GM12878 (cell line): ENCODE measurements at regions of chr21 and their contacts with region 1.

Region 1: GRCh38 chr21:36504067-36505058 is 24.4 kb upstream of the CLDN14 start:
- DNase-seq: no peak
- ATAC-seq: peak; percentile 15
- H3K4me3 ChIP-seq: no peak overlapping the region
- H3K27ac ChIP-seq: peak overlapping the region; percentile 71
- H3K4me1 ChIP-seq: peaks cover 35% of the 10 kb centered on the region
- H3K27me3 ChIP-seq: no peaks in the 10 kb centered on the region
- CTCF ChIP-seq: peak; percentile 78 to 85 (median 85); a peak in 5 of 6 replicates
- EP300 ChIP-seq: no peak
- POLR2A ChIP-seq: no peak
- RAD21 ChIP-seq: peak; percentile 97

Region 2: DNA sequence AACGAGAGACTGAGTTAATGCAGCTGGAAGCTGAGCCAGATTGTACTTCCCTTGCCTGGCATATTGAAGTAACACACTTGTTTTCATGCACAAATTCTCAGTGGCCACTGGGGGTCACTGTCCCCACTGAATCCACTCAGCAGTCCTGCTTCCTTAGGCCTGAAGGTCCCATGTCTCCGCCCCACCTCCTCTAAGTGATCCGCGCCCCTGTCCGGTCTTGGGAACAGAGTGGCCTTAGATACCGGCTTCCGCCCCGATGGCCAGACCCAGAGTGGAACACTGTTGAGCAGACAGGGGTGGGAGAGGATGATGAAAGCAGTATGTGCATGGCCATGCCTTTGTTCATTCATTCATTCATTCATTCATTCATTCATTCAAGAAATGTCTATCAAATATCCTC is 84.4 kb before region 1 on chr21:
- CTCF ChIA-PET with region 1: interaction called, 18 read pairs
- POLR2A ChIA-PET with region 1: no interaction called
- RAD21 ChIA-PET with region 1: interaction called, 8 read pairs
- SMC1A ChIA-PET with region 1: interaction called, 7 read pairs
- in situ Hi-C with region 1: no loop called
- intact Hi-C with region 1: loop called (anchors 2 kb)
- DNase-seq: no peak
- ATAC-seq: peak; percentile 93
- H3K4me3 ChIP-seq: no peak overlapping the region
- H3K27ac ChIP-seq: no peak overlapping the region
- H3K4me1 ChIP-seq: no peaks in the 10 kb centered on the region
- H3K27me3 ChIP-seq: no peaks in the 10 kb centered on the region
- CTCF ChIP-seq: peak; percentile 76 to 90 (median 78)
- EP300 ChIP-seq: no peak
- POLR2A ChIP-seq: no peak
- RAD21 ChIP-seq: peak; percentile 78

Region 3: GRCh38 chr21:36478207-36478701 is 26.1 kb before region 1 on chr21:
- CTCF ChIA-PET with region 1: interaction called, 11 read pairs
- POLR2A ChIA-PET with region 1: no interaction called
- RAD21 ChIA-PET with region 1: interaction called, 6 read pairs
- SMC1A ChIA-PET with region 1: no interaction called
- in situ Hi-C with region 1: no loop called
- intact Hi-C with region 1: no loop called
- DNase-seq: no peak
- ATAC-seq: peak; percentile 76
- H3K4me3 ChIP-seq: no peak overlapping the region
- H3K27ac ChIP-seq: no peak overlapping the region
- H3K4me1 ChIP-seq: peaks cover 3% of the 10 kb centered on the region
- H3K27me3 ChIP-seq: no peaks in the 10 kb centered on the region
- CTCF ChIP-seq: no peak
- EP300 ChIP-seq: no peak
- POLR2A ChIP-seq: no peak
- RAD21 ChIP-seq: no peak

Region 4: DNA sequence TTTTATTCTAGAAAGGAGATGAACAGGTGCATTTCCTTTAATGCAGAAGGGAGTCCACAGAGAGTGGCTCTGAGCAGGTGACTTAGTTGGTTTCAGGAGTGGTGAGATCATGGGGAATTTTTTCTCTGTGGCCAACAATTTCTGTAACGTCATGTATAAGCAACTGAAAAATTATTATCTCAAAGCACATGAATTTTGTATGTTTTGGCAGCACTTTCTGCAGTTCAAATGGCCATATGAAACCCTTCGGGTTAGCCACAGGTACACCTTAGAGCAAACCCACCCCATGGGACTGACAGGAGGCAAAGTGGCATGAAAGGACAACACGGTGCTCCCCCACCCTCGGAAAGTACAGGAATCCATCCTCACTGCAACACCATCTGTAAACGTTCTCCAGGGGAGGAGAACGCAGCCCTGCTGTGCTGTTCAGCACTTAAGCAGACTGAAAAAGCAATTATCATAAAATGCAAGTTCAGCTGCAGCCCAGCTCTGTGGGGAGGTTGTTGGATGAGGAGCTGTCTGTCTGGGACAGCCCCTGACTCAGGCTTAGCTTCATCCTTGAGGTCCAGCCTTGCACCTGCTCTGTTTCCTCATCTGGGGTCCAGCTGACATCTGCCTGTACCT is 31.4 kb after region 1 on chr21:
- CTCF ChIA-PET with region 1: interaction called, 67 read pairs
- POLR2A ChIA-PET with region 1: interaction called, 21 read pairs
- RAD21 ChIA-PET with region 1: interaction called, 58 read pairs
- SMC1A ChIA-PET with region 1: interaction called, 129 read pairs
- in situ Hi-C with region 1: no loop called
- intact Hi-C with region 1: no loop called
- DNase-seq: peak; percentile 96
- ATAC-seq: peak; percentile 80
- H3K4me3 ChIP-seq: peak overlapping the region; percentile 45; the same call in 1 of the 2 replicates
- H3K27ac ChIP-seq: peak overlapping the region; percentile 90
- H3K4me1 ChIP-seq: peaks cover 40% of the 10 kb centered on the region
- H3K27me3 ChIP-seq: no peaks in the 10 kb centered on the region
- CTCF ChIP-seq: no peak
- EP300 ChIP-seq: peak; percentile 92 to 95
- POLR2A ChIP-seq: peak; percentile 61
- RAD21 ChIP-seq: peak; percentile 6; the same call in 1 of the 2 replicates

Region 5: GRCh38 chr21:36589355-36589971 is 85.1 kb after region 1 on chr21:
- CTCF ChIA-PET with region 1: interaction called, 86 read pairs
- POLR2A ChIA-PET with region 1: interaction called, 5 read pairs
- RAD21 ChIA-PET with region 1: interaction called, 26 read pairs
- SMC1A ChIA-PET with region 1: interaction called, 82 read pairs
- in situ Hi-C with region 1: loop called (anchors 5 kb)
- intact Hi-C with region 1: loop called (anchors 1 kb)
- DNase-seq: peak; percentile 16
- ATAC-seq: peak; percentile 99
- H3K4me3 ChIP-seq: no peak overlapping the region
- H3K27ac ChIP-seq: no peak overlapping the region
- H3K4me1 ChIP-seq: no peaks in the 10 kb centered on the region; the same call in 1 of the 2 replicates
- H3K27me3 ChIP-seq: no peaks in the 10 kb centered on the region
- CTCF ChIP-seq: peak; percentile 66 to 69 (median 67)
- EP300 ChIP-seq: no peak
- POLR2A ChIP-seq: no peak
- RAD21 ChIP-seq: peak; percentile 77

Region 6: DNA sequence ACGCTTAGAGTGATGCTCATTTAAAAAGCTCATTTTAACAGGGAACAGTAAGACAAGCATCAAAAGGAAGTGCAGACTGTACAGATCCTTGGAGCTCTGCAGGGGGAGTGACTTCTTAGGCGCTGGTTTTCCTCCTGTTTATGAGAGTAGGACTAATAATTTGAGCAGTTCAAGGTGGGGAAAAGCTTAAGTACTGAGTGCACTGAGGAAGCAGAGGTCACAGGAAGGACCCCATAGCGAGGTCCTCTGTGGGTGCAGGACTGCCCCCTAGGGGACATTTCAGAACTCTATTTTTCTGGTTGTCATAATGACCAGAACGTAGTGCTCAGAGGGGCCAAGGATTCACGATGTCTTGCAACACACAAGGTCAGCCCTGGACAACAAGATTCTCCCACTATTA is 350.0 kb after region 1 on chr21:
- CTCF ChIA-PET with region 1: interaction called, 6 read pairs
- POLR2A ChIA-PET with region 1: no interaction called
- RAD21 ChIA-PET with region 1: interaction called, 6 read pairs
- SMC1A ChIA-PET with region 1: interaction called, 7 read pairs
- in situ Hi-C with region 1: no loop called
- intact Hi-C with region 1: loop called (anchors 2 kb)
- DNase-seq: no peak
- ATAC-seq: peak; percentile 83
- H3K4me3 ChIP-seq: no peak overlapping the region
- H3K27ac ChIP-seq: no peak overlapping the region
- H3K4me1 ChIP-seq: no peaks in the 10 kb centered on the region
- H3K27me3 ChIP-seq: no peaks in the 10 kb centered on the region
- CTCF ChIP-seq: peak; percentile 51 to 61 (median 53)
- EP300 ChIP-seq: no peak
- POLR2A ChIP-seq: no peak
- RAD21 ChIP-seq: peak; percentile 65

Region 7: GRCh38 chr21:38244885-38245545 is 1740.7 kb after region 1 on chr21:
- CTCF ChIA-PET with region 1: no interaction called
- POLR2A ChIA-PET with region 1: no interaction called
- RAD21 ChIA-PET with region 1: no interaction called
- SMC1A ChIA-PET with region 1: no interaction called
- in situ Hi-C with region 1: loop called (anchors 25 kb)
- intact Hi-C with region 1: no loop called
- DNase-seq: peak; percentile 59
- ATAC-seq: peak; percentile 90
- H3K4me3 ChIP-seq: no peak overlapping the region
- H3K27ac ChIP-seq: no peak overlapping the region
- H3K4me1 ChIP-seq: peaks cover 16% of the 10 kb centered on the region
- H3K27me3 ChIP-seq: no peaks in the 10 kb centered on the region
- CTCF ChIP-seq: no peak
- EP300 ChIP-seq: peak; percentile 34 to 87; a peak in 2 of 4 replicates
- POLR2A ChIP-seq: no peak
- RAD21 ChIP-seq: no peak